ENCODE measurements at regions of chr1 and their contacts with region 1.

Region 1: DNA sequence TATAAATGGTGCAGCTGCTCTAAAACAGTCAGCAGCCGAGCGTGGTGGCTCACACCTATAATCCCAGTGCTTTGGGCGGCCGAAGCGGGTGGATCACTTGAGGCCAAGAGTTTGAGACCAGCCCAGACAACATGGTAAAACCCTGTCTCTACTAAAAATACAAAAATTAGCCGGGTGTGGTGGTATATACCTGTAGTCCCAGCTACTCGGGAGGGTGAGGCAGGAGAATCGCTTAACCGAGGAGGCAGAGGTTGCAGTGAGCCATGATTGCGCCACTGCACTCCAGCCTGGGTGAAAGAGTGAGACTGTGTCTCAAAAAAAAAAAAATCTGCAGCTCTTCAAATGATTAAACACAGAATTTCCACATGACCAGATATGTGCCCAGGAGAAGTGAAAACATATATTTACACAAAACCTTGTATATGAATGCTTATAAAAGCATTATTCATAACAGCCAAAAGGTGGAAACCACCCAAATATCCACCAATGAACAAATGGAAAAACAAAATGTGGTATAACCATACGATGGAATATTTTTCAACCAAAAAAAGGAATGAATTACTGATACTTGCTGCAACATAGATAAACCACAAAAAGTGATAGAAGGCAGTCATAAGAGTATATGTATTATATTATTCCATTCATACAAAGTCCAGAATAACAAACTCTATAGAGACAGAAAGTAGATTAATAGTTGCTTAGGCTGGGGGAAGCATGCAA is 14.1 kb downstream of the EPS15 start:
- DNase-seq: no peak
- H3K4me3 Mint-ChIP-seq: no peak overlapping the region
- H3K27ac Mint-ChIP-seq: peak overlapping the region; percentile 60
- H3K4me1 Mint-ChIP-seq: peaks cover 16% of the 10 kb centered on the region
- H3K27me3 Mint-ChIP-seq: no peaks in the 10 kb centered on the region

Region 2: DNA sequence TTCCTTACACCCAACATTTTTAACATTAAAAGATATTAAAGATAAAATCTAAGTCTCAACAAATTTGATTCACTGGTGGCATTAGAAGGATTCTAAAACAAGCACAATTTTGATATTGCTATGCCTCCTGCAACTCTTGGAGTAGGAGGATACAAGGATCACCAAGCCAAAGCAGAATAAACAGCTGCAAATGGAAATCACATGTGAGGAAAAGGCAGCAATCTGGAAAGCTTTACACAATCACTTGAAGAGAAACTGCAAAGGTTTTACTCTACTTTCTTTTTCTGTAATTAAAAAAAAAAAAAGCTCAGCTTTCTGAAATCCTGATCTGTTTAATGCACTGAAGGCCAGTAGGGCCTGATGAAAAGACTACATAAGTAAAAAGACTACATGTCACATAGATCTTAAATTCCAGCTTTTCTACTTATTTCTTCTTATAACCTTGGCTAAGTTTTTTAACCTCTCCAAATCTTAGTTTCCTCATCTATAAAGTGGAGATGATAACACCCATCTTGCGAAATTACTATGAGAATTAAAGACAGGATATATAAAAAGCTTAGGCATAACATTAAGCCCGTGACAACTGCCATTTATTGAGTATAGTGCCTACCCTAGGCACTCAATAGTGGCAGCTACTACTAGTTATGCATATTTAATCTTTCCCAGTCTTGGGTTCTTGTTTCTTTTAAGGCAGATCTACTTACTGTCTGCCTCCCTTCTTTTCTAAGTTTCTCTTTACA is 59.4 kb before region 1 on chr1:
- intact Hi-C with region 1: loop called (anchors 1 kb)
- DNase-seq: no peak
- H3K4me3 Mint-ChIP-seq: no peak overlapping the region
- H3K27ac Mint-ChIP-seq: no peak overlapping the region
- H3K4me1 Mint-ChIP-seq: peaks cover 53% of the 10 kb centered on the region
- H3K27me3 Mint-ChIP-seq: no peaks in the 10 kb centered on the region

Region 3: DNA sequence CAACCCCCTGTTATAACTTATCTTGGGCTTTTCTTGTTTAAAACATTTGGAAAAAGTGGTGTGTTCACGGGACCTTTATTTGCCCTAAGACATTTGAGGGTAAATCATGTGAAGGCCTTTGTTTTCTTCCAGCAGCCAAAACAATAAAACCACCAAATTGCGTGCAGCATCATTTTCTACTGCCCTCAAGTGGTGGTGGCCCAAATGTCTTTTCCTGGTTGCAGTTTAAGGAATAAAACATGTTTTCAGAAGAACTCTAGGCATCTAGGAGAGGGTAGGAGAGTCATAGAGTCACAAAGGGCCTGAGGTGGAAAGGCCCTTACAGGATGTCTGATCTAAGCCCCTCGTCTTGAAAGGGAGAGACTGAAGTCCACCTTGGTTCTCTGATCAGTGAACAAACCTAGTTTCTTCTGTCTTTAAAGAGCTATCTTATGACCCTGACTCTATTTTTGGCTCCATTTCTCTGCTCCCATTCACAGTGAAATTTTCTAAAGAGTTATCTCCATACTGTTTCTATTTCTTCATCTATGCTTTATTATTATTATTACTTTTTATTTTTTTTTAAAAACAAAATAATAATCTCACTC is 30.1 kb after region 1 on chr1:
- intact Hi-C with region 1: loop called (anchors 2 kb)
- DNase-seq: no peak
- H3K4me3 Mint-ChIP-seq: no peak overlapping the region
- H3K27ac Mint-ChIP-seq: no peak overlapping the region
- H3K4me1 Mint-ChIP-seq: peaks cover 20% of the 10 kb centered on the region
- H3K27me3 Mint-ChIP-seq: no peaks in the 10 kb centered on the region

Region 4: GRCh38 chr1:51541313-51542174 is 36.6 kb after region 1 on chr1:
- intact Hi-C with region 1: loop called (anchors 1 kb)
- DNase-seq: no peak
- H3K4me3 Mint-ChIP-seq: no peak overlapping the region
- H3K27ac Mint-ChIP-seq: peak overlapping the region; percentile 67
- H3K4me1 Mint-ChIP-seq: peaks cover 31% of the 10 kb centered on the region
- H3K27me3 Mint-ChIP-seq: no peaks in the 10 kb centered on the region